ENCODE measurements at regions of chr11 and their contacts with region 1.

Region 1: DNA sequence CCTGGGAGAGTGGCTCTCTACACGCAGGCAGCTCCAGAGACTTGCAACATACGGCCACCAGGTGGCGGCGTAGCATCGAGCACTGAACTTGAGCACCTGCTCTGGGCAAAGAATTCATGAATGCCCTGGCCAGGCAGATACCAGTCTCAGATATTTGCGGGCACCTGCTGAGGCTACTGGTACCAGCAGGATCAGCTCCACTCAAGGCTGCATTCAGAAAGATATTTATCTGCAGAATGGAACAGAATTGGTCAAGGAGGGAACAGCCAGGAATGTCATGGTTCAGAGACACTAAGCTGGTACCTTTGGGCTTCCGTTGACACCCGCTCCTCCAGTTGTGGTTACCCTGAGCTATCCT is 10.8 kb upstream of the CCDC86 start:
- DNase-seq: peak; percentile 68 to 77 (median 73)
- H3K4me3 ChIP-seq: no peak overlapping the region
- H3K4me3 Mint-ChIP-seq: peak overlapping the region in 2 of 8 donors; percentile 63 to 78
- H3K27ac ChIP-seq: no peak overlapping the region
- H3K27ac Mint-ChIP-seq: peak overlapping the region in 2 of 7 donors; percentile 83 to 93
- H3K4me1 ChIP-seq: no peaks in the 10 kb centered on the region
- H3K4me1 Mint-ChIP-seq: peaks cover 0 to 3% (median 0%) of the 10 kb centered on the region in 4 donors
- H3K27me3 ChIP-seq: no peaks in the 10 kb centered on the region
- H3K27me3 Mint-ChIP-seq: peaks cover 3 to 8% of the 10 kb centered on the region in 2 donors

Region 2: GRCh38 chr11:60841797-60842667 is 10.9 kb after region 1 on chr11 and contains the start of gene CCDC86:
- CTCF ChIA-PET with region 1: interaction called, 10 read pairs
- POLR2A ChIA-PET with region 1: no interaction called
- intact Hi-C with region 1: no loop called
- DNase-seq: peak; percentile 97 to 100 (median 98)
- H3K4me3 ChIP-seq: peak within 1 kb of the TSS; percentile 69 to 87
- H3K4me3 Mint-ChIP-seq: peak within 1 kb of the TSS; percentile 89 to 99 (median 96)
- H3K27ac ChIP-seq: peak within 1 kb of the TSS; percentile 68
- H3K27ac Mint-ChIP-seq: peak within 1 kb of the TSS; percentile 93 to 99 (median 97)
- H3K4me1 ChIP-seq: peaks cover 38% of the 10 kb centered on the region
- H3K4me1 Mint-ChIP-seq: peaks cover 31 to 53% (median 43%) of the 10 kb centered on the region in 4 donors
- H3K27me3 ChIP-seq: no peaks in the 10 kb centered on the region
- H3K27me3 Mint-ChIP-seq: no peaks in the 10 kb centered on the region
- total RNA-seq, gene CCDC86: 7.5 to 9.6 TPM

Region 3: DNA sequence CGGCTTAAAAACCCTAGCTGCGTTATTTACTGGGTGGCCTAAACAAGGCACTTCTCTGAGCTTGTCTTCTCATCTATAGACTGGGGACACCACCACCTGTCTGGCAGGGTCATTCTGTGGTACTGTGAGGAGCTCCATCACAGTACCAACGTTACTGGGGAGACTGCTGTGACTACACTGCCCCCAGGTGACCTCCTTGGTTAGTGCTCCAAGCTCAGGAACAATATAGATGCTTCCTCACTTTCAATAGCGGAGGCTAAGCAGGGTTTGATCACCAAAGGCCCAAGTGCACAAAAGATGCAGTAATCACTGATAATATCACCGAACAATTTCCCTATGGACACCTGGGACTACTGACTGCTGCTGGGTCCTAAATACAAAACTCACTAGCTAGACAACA is 56.4 kb after region 1 on chr11:
- CTCF ChIA-PET with region 1: interaction called, 70 read pairs
- POLR2A ChIA-PET with region 1: interaction called, 11 read pairs
- intact Hi-C with region 1: loop called (anchors 1 kb)
- DNase-seq: peak in 2 of 5 donors; percentile 14 to 31
- H3K4me3 ChIP-seq: no peak overlapping the region
- H3K4me3 Mint-ChIP-seq: no peak overlapping the region
- H3K27ac ChIP-seq: no peak overlapping the region
- H3K27ac Mint-ChIP-seq: peak overlapping the region in 1 of 7 donors; percentile 44
- H3K4me1 ChIP-seq: no peaks in the 10 kb centered on the region
- H3K4me1 Mint-ChIP-seq: peaks cover 0 to 10% (median 8%) of the 10 kb centered on the region in 4 donors
- H3K27me3 ChIP-seq: no peaks in the 10 kb centered on the region
- H3K27me3 Mint-ChIP-seq: no peaks in the 10 kb centered on the region

Region 4: GRCh38 chr11:60899046-60899936 is 68.2 kb after region 1 on chr11:
- CTCF ChIA-PET with region 1: interaction called, 53 read pairs
- POLR2A ChIA-PET with region 1: no interaction called
- intact Hi-C with region 1: loop called (anchors 1 kb)
- DNase-seq: peak in 4 of 5 donors; percentile 30 to 49 (median 44)
- H3K4me3 ChIP-seq: no peak overlapping the region
- H3K4me3 Mint-ChIP-seq: no peak overlapping the region
- H3K27ac ChIP-seq: no peak overlapping the region
- H3K27ac Mint-ChIP-seq: peak overlapping the region in 3 of 7 donors; percentile 13 to 49 (median 24)
- H3K4me1 ChIP-seq: peaks cover 10% of the 10 kb centered on the region
- H3K4me1 Mint-ChIP-seq: peaks cover 7 to 16% (median 11%) of the 10 kb centered on the region in 4 donors
- H3K27me3 ChIP-seq: no peaks in the 10 kb centered on the region
- H3K27me3 Mint-ChIP-seq: no peaks in the 10 kb centered on the region

Region 5: DNA sequence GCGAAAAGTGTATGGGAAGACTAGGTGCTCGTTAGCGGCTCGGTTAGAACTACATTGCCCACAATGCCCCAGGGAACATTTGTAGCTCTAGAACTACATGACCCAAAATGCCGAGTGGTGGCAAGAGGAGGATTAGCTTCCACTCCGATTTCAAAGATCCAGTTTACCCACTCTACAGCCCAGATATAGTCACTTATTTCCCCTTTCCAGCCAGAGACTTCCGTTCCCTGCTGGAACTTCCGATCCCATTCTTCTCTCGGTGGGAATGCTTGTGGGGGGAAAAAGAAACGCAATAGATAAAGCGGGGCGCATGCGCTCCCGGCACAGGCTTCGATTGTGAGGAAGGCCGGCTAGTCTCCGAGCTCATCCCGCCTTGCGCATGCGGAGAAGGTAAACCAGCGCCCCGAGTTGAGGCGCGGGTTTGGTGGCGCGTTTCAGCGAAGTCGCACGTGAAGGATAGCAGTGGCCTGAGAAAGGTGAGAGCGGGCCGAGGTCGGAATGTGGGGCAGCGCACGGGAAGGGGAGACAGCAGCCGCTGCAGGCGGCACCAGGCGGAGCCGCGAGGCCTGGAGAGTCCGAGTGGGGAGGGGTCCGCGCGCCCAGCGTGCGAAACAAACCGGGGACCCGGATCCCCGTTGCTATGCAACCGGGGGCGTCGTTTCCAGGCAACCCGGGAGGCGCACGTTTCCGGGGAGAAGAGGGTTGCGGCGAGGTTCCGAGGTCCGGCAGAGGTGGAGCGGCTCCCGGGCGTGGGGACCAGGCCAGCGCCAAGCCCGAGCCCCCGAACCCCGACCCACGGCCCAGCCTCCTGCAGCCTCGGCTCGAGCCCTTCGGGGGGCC is 82.9 kb after region 1 on chr11 and contains the start of gene TMEM109:
- CTCF ChIA-PET with region 1: interaction called, 24 read pairs
- POLR2A ChIA-PET with region 1: no interaction called
- intact Hi-C with region 1: no loop called
- DNase-seq: peak; percentile 90 to 92 (median 91)
- H3K4me3 ChIP-seq: peak within 1 kb of the TSS; percentile 79 to 96
- H3K4me3 Mint-ChIP-seq: peak within 1 kb of the TSS; percentile 92 to 100 (median 98)
- H3K27ac ChIP-seq: peak within 1 kb of the TSS; percentile 96
- H3K27ac Mint-ChIP-seq: peak within 1 kb of the TSS; percentile 87 to 99 (median 98)
- H3K4me1 ChIP-seq: peaks cover 47% of the 10 kb centered on the region
- H3K4me1 Mint-ChIP-seq: peaks cover 31 to 65% (median 44%) of the 10 kb centered on the region in 4 donors
- H3K27me3 ChIP-seq: no peaks in the 10 kb centered on the region
- H3K27me3 Mint-ChIP-seq: no peaks in the 10 kb centered on the region
- total RNA-seq, gene TMEM109: 66.9 to 68.0 TPM

Region 6: DNA sequence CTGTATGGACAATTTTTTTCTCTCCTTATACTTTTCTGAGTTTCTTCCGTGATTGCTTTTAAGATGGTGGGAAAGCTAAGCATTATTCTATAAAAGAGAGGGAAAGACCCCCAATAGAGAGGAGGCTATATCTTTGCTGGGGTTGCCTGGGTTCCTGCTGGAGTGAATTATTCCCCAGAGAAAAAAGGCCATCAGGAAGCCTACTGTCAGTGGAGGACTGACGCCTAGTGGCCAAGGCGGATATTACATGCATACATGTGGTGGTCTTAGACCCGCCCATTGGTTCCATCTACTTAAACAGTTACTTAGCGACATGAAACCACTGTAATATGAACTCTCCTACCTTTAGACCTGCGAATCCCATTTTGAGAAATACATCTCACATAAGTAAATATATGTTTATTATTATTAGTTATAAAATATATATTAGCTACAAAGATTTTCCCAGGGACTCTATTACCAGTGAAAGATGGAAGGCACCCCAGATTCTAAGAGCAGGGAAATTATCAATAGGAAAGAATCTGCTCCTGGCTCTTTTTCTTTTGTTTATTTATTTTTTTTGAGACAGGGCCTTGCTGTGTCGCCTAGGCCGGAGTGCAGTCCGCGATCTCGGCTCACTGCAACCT is 356.5 kb after region 1 on chr11:
- CTCF ChIA-PET with region 1: interaction called, 173 read pairs
- POLR2A ChIA-PET with region 1: no interaction called
- intact Hi-C with region 1: loop called (anchors 1 kb)
- DNase-seq: peak; percentile 66 to 73 (median 71)
- H3K4me3 ChIP-seq: no peak overlapping the region
- H3K4me3 Mint-ChIP-seq: no peak overlapping the region
- H3K27ac ChIP-seq: no peak overlapping the region
- H3K27ac Mint-ChIP-seq: no peak overlapping the region
- H3K4me1 ChIP-seq: no peaks in the 10 kb centered on the region
- H3K4me1 Mint-ChIP-seq: peaks cover 0 to 3% (median 0%) of the 10 kb centered on the region in 4 donors
- H3K27me3 ChIP-seq: no peaks in the 10 kb centered on the region
- H3K27me3 Mint-ChIP-seq: peaks cover 3 to 9% of the 10 kb centered on the region in 2 donors